ENCODE measurements at regions of chr1 and their contacts with region 1.

Region 1: GRCh38 chr1:108897865-108898720 is 21.3 kb downstream of the GPSM2 start:
- DNase-seq: peak; percentile 73
- H3K4me3 Mint-ChIP-seq: no peak overlapping the region
- H3K27ac Mint-ChIP-seq: peak overlapping the region; percentile 23
- H3K4me1 Mint-ChIP-seq: peaks cover 20% of the 10 kb centered on the region
- H3K27me3 Mint-ChIP-seq: no peaks in the 10 kb centered on the region
- CTCF ChIP-seq: peak; percentile 63

Region 2: GRCh38 chr1:108512239-108512981 is 385.7 kb before region 1 on chr1:
- CTCF ChIA-PET with region 1: no interaction called
- POLR2A ChIA-PET with region 1: no interaction called
- intact Hi-C with region 1: loop called (anchors 2 kb)
- DNase-seq: peak; percentile 52
- H3K4me3 Mint-ChIP-seq: no peak overlapping the region
- H3K27ac Mint-ChIP-seq: no peak overlapping the region
- H3K4me1 Mint-ChIP-seq: no peaks in the 10 kb centered on the region
- H3K27me3 Mint-ChIP-seq: peaks cover 15% of the 10 kb centered on the region
- CTCF ChIP-seq: peak; percentile 86

Region 3: DNA sequence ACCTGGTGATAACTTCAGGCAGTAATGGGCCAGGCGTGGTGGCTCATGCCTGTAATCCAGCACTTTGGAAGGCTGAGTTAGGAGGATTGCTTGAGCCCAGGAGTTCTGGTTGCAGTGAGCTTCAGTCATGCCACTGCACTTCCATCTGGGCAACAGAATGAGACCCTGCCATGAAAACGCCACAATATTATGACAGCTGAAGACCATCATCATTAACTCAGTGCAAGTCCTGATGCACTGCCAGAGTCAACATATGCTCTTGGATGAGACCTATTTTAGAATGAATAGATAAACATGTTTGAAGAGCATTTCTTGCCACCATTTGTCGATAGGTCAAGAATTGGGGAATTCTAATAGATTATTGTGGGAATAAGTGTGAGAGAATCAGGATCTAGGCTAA is 263.6 kb before region 1 on chr1:
- CTCF ChIA-PET with region 1: no interaction called
- POLR2A ChIA-PET with region 1: no interaction called
- intact Hi-C with region 1: no loop called
- DNase-seq: no peak
- H3K4me3 Mint-ChIP-seq: no peak overlapping the region
- H3K27ac Mint-ChIP-seq: no peak overlapping the region
- H3K4me1 Mint-ChIP-seq: no peaks in the 10 kb centered on the region
- H3K27me3 Mint-ChIP-seq: no peaks in the 10 kb centered on the region
- CTCF ChIP-seq: no peak

Region 4: DNA sequence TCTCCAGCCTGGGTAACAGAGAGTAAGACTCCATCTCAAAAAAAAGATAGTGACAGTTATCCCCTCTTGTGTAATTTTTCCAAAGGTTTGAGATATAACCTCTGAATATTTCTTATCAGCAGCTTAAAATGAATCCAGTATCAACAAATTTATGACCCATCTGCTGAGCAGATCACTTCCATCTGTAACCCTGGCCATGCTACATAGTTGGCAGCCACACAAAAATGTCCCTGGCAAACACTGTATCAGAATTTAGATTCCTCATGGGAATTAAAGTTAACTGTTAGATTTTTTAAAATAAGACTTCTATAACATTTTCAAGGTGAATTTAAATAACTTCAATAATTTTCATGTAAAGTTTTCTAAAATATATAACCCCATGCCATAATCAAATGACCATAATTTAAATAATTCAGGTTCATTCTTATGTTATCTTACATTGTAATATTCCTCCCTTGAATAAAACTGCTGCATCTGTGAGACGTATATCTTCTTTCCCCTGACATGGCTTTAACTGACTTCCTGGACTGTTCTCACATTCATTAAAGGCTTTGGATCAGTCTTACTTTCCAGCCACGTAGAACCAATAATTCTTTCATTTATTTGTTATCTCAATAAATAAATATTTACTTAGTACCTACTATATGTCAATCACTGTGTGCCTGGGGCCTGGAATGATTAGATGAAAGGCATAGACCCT is 211.3 kb before region 1 on chr1:
- CTCF ChIA-PET with region 1: no interaction called
- POLR2A ChIA-PET with region 1: no interaction called
- intact Hi-C with region 1: no loop called
- DNase-seq: no peak
- H3K4me3 Mint-ChIP-seq: no peak overlapping the region
- H3K27ac Mint-ChIP-seq: no peak overlapping the region
- H3K4me1 Mint-ChIP-seq: peaks cover 16% of the 10 kb centered on the region
- H3K27me3 Mint-ChIP-seq: no peaks in the 10 kb centered on the region
- CTCF ChIP-seq: no peak

Region 5: DNA sequence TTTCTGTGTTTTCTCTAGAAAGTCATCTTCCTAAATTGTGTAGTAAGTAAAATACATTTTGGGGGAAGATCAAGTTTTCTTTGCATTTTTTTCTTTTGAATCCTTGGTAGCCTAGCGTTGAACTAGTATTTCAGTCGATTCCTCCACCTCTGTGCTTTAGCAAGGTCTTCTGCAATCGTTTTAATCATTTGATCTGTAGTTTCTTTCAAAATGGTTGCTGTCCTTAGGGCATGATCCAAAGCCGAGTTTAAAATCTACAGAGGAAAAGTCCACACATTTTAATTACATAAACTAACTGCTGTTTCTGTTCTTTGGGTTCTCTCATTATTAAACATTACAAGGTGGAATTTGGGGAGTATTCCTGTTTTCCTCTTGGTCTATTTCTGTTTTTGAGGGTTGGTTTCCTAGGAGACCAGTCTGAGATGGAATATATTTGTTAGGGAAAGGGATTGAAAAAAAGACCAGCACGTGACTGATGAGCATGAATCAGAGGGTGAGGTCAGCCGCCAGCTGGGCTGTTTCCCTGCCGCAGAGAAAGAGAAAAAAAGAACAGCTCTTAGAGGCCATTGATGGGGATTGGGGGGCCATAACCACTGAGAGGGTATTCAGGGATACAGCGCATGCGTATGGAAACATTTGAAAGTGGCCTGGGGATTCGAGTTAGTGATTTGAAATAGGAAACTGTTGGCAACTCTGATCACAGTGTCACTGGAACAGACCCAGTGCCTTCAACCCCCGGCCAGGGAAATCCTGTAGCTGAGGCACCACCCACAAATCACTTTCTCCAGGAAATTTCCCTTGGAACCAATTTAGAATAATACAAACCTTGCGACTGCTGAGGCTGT is 81.8 kb before region 1 on chr1:
- CTCF ChIA-PET with region 1: interaction called, 51 read pairs
- POLR2A ChIA-PET with region 1: interaction called, 7 read pairs
- intact Hi-C with region 1: no loop called
- DNase-seq: peak; percentile 69
- H3K4me3 Mint-ChIP-seq: peak overlapping the region; percentile 68
- H3K27ac Mint-ChIP-seq: peak overlapping the region; percentile 100
- H3K4me1 Mint-ChIP-seq: peaks cover 27% of the 10 kb centered on the region
- H3K27me3 Mint-ChIP-seq: no peaks in the 10 kb centered on the region
- CTCF ChIP-seq: no peak

Region 6: GRCh38 chr1:108886292-108886691 is 11.8 kb before region 1 on chr1:
- CTCF ChIA-PET with region 1: interaction called, 53 read pairs
- POLR2A ChIA-PET with region 1: interaction called, 25 read pairs
- intact Hi-C with region 1: no loop called
- DNase-seq: no peak
- H3K4me3 Mint-ChIP-seq: no peak overlapping the region
- H3K27ac Mint-ChIP-seq: no peak overlapping the region
- H3K4me1 Mint-ChIP-seq: peaks cover 61% of the 10 kb centered on the region
- H3K27me3 Mint-ChIP-seq: no peaks in the 10 kb centered on the region
- CTCF ChIP-seq: no peak

Measured in MCF 10A (cell line).